Caco-2 (cell line): ENCODE measurements at regions of chr4 and their contacts with region 1.

Region 1: DNA sequence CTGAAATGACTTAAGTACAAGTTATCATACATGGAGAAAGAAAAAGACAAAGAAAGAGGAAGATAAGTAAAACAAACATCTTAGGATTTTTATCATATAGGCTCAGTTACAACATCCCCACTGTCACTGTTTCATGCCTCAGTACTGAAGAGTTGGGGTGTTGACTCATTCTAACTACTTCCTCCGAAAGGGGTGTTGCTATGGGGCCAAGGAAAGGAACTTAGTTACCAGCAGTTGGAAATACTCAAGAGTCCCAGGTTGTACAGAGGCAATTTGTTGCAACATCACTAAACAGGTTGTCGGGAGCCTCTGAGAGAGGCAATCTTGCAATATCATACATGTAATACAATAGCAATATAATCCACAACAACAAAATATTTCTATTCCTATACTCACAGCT is 1264.7 kb downstream of the PCDH7 start:
- DNase-seq: peak; percentile 69 to 71
- H3K4me3 ChIP-seq: no peak overlapping the region
- H3K4me3 Mint-ChIP-seq: no peak overlapping the region
- H3K27ac Mint-ChIP-seq: peak overlapping the region; percentile 2
- H3K4me1 ChIP-seq: peaks cover 48% of the 10 kb centered on the region
- H3K4me1 Mint-ChIP-seq: peaks cover 10% of the 10 kb centered on the region
- H3K27me3 ChIP-seq: no peaks in the 10 kb centered on the region
- H3K27me3 Mint-ChIP-seq: no peaks in the 10 kb centered on the region
- CTCF ChIP-seq: no peak

Region 2: GRCh38 chr4:32002037-32002747 is 17.3 kb after region 1 on chr4:
- CTCF ChIA-PET with region 1: no interaction called
- POLR2A ChIA-PET with region 1: no interaction called
- intact Hi-C with region 1: loop called (anchors 1 kb)
- DNase-seq: no peak
- H3K4me3 ChIP-seq: no peak overlapping the region
- H3K4me3 Mint-ChIP-seq: no peak overlapping the region
- H3K27ac Mint-ChIP-seq: peak overlapping the region; percentile 55
- H3K4me1 ChIP-seq: peaks cover 13% of the 10 kb centered on the region
- H3K4me1 Mint-ChIP-seq: peaks cover 12% of the 10 kb centered on the region
- H3K27me3 ChIP-seq: no peaks in the 10 kb centered on the region
- H3K27me3 Mint-ChIP-seq: no peaks in the 10 kb centered on the region
- CTCF ChIP-seq: no peak

Region 3: GRCh38 chr4:32025851-32026459 is 41.1 kb after region 1 on chr4:
- CTCF ChIA-PET with region 1: no interaction called
- POLR2A ChIA-PET with region 1: no interaction called
- intact Hi-C with region 1: loop called (anchors 1 kb)
- DNase-seq: peak; percentile 67 to 77
- H3K4me3 ChIP-seq: no peak overlapping the region
- H3K4me3 Mint-ChIP-seq: peak overlapping the region; percentile 29
- H3K27ac Mint-ChIP-seq: peak overlapping the region; percentile 85
- H3K4me1 ChIP-seq: peaks cover 47% of the 10 kb centered on the region
- H3K4me1 Mint-ChIP-seq: peaks cover 46% of the 10 kb centered on the region
- H3K27me3 ChIP-seq: no peaks in the 10 kb centered on the region
- H3K27me3 Mint-ChIP-seq: no peaks in the 10 kb centered on the region
- CTCF ChIP-seq: no peak

Region 4: DNA sequence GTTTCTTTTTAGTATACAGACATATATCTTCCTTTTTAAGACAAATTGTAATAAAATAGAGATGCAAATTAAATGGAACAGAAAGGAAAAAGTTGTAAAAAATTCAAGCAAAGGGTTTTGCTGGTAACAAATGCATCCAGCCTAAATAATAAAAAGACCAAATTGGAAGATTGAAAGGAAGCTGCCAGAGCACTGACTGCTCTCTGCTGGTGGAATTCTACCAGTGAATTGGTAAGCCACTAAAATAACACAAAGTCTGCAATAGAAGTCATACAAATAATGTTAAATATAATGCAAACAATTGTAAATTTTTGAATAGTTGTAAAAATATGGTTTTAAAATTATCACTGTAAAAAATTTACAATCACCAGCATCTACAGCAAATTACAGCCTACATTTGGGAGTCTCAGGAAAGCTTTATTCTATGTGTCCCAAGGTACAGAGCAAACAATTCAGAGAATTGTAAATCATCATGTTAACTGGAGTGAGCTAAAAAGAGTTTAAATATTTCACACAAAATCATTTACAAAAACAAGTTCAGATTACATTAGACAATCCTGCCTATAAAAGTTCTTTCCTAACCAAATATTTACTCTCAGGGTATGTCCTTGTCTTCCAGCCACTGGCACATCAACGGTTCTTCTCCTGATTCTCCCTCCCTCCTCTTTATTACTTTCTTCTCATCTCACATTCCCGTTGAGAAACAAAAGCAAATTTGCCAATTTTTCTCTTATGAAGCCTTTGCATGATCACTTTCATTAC is 57.8 kb after region 1 on chr4:
- CTCF ChIA-PET with region 1: no interaction called
- POLR2A ChIA-PET with region 1: no interaction called
- intact Hi-C with region 1: loop called (anchors 2 kb)
- DNase-seq: no peak
- H3K4me3 ChIP-seq: no peak overlapping the region
- H3K4me3 Mint-ChIP-seq: no peak overlapping the region
- H3K27ac Mint-ChIP-seq: no peak overlapping the region
- H3K4me1 ChIP-seq: peaks cover 3% of the 10 kb centered on the region; the same call in 1 of the 2 replicates
- H3K4me1 Mint-ChIP-seq: no peaks in the 10 kb centered on the region
- H3K27me3 ChIP-seq: no peaks in the 10 kb centered on the region
- H3K27me3 Mint-ChIP-seq: no peaks in the 10 kb centered on the region
- CTCF ChIP-seq: peak in 1 of 2 experiments; percentile 28